Psoas muscle (tissue), 8 donors: ENCODE measurements at regions of chr2 and their contacts with region 1.

Region 1: DNA sequence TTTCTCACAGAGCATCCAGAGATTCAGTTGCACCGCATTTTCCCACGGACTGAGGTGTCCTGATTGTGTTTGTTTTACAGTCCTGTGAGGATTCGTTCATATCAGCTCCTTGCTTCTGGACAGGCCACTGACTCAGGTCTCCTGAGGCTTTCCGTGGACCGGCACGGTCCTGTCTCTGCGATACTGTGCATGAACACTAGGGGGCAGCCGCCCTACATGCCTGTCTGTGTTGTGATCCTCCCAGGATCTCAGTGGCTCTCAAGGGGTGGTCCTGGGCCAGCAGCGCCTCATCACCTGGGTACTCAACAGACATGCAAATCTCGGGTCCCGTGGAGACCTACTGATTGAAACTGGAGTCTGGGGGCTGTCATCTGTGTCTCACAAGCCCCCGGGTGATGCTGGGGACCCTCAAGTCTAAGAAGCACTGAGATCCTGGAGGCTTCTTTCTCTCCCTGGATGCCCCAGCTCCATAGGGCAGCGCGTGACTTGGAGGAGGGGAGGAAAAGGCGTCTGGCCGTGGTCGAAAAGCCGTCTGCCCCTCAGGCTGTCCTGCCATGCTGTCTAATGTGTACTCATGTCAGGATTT is 28.9 kb downstream of the IL1R2 start:
- DNase-seq: peak; percentile 91 to 94
- ATAC-seq: peak; percentile 97 to 99 (median 98)
- H3K4me3 ChIP-seq: no peak overlapping the region
- H3K27ac ChIP-seq: no peak overlapping the region
- H3K4me1 ChIP-seq: peaks cover 15% of the 10 kb centered on the region
- H3K27me3 ChIP-seq: no peaks in the 10 kb centered on the region
- CTCF ChIP-seq: peak; percentile 100

Region 2: DNA sequence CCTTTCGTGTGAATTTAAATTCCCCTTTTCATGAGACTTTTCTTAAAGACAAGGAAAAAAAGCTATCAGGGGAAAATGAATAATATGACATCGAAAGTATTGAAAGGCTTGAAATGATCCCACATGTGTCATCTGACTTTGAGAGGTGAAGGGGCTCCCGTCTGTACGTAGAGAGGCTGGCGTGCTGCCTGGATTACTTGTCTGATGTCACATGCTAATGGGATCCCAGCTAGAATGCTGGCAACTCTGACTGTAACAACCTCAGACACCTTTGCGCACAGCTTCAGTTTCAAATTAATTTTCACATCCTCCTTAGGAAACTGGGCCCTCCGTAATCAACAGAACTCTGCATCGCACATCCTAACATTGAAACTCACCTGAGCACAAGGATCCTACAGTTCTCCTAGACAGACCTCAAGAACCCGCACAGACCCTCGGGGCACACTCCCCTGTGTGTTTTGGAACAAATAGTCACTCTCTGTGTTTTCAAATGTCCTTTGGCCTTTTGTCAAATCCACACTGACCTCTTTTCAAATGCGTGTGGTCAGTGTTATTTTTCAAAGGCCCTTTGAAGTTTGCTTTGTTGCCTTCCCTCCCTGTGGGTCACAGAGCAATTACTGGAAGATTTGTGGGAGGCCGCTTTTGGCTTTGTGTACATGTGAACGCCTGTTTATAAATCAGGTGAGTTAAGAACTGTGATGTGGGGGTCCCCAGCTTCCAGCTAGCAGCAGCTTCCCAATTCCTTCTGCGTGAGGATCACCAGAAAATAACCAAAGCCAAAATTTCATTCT is 37.0 kb after region 1 on chr2:
- intact Hi-C with region 1: loop called in 1 of 2 experiments (anchors 5 kb)
- DNase-seq: no peak
- ATAC-seq: no peak
- H3K4me3 ChIP-seq: no peak overlapping the region
- H3K27ac ChIP-seq: no peak overlapping the region
- H3K4me1 ChIP-seq: peaks cover 30% of the 10 kb centered on the region
- H3K27me3 ChIP-seq: no peaks in the 10 kb centered on the region
- CTCF ChIP-seq: no peak

Region 3: DNA sequence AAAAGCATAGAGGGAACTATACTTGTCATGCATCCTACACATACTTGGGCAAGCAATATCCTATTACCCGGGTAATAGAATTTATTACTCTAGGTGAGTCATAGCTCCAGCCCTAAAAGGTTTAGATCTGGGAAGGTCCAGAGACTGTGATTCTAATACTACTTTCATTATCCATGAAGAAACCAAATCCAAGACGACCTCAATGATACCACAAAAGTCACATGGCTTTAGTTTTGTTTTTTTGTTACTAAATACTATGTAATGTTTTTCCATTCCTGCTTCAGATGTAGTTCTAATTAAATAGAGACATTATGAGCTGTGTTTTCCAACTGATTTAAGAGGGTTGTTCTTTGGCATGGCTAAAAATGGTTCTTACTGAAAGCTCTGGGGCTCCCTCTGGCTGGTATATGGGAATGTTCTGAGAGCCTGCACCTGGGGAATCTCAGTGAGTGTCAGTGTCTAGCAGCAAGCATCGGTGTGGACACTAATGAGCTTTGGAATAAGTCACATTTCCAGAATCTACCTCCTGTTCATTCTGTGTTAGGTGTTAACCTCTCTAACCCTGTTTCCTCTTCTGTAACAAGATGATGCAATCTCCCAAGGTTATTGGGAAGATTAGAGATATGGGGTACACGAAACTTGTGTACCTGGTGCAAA is 145.6 kb after region 1 on chr2:
- intact Hi-C with region 1: loop called (anchors 1 to 5 kb)
- DNase-seq: no peak
- ATAC-seq: peak; percentile 83 to 98 (median 88)
- H3K4me3 ChIP-seq: no peak overlapping the region
- H3K27ac ChIP-seq: no peak overlapping the region
- H3K4me1 ChIP-seq: peaks cover 15% of the 10 kb centered on the region
- H3K27me3 ChIP-seq: no peaks in the 10 kb centered on the region
- CTCF ChIP-seq: peak; percentile 68

Region 4: GRCh38 chr2:102193074-102193473 is 172.4 kb after region 1 on chr2:
- intact Hi-C with region 1: loop called in 1 of 2 experiments (anchors 1 kb)
- DNase-seq: no peak
- ATAC-seq: no peak
- H3K4me3 ChIP-seq: no peak overlapping the region
- H3K27ac ChIP-seq: no peak overlapping the region
- H3K4me1 ChIP-seq: no peaks in the 10 kb centered on the region
- H3K27me3 ChIP-seq: no peaks in the 10 kb centered on the region
- CTCF ChIP-seq: no peak

Region 5: DNA sequence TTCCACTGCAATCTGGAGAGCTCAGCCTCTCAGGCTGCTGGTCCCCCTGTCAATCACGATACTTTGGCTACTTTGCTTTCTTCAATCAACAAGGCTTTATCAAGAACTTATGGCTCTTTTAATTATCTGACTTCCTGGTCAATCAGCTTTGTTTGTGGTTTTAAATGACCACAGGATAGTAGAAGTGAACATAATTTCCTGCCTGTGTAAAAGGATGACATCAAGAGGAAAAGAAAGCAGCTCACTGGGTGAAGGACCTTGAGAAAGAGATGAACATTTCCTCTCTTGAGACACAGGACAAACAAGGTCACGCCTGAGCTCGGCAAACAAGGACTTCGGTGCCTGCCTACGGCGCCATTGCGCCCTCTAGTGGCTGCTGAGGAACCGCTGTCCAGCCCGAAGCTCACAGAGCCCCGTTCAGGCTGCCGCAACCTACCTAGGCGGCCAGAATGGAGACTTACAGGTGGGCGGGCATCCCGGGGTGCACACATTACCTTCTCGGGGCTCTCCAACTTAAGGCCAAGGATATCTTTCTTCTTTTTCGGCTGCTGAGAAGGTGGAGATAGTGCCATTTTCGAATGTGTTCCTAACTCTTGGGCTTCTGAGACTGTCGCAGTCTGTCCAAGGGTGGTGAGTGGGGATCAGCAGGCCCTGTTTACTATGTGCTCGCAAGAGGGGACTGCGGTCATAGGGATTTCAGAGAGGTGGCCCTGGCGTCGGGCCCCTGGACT is 220.1 kb after region 1 on chr2:
- intact Hi-C with region 1: loop called (anchors 1 to 2 kb)
- DNase-seq: peak; percentile 90 to 96
- ATAC-seq: peak; percentile 96 to 99 (median 98)
- H3K4me3 ChIP-seq: no peak overlapping the region
- H3K27ac ChIP-seq: peak overlapping the region; percentile 41
- H3K4me1 ChIP-seq: no peaks in the 10 kb centered on the region
- H3K27me3 ChIP-seq: no peaks in the 10 kb centered on the region
- CTCF ChIP-seq: peak; percentile 99

Region 6: GRCh38 chr2:102355526-102356380 is 335.1 kb after region 1 on chr2 and contains the start of gene IL18R1:
- intact Hi-C with region 1: loop called (anchors 10 kb)
- DNase-seq: peak; percentile 81 to 88
- ATAC-seq: peak; percentile 96 to 100 (median 99)
- H3K4me3 ChIP-seq: peak within 1 kb of the TSS; percentile 84
- H3K27ac ChIP-seq: peak within 1 kb of the TSS; percentile 32
- H3K4me1 ChIP-seq: no peaks in the 10 kb centered on the region
- H3K27me3 ChIP-seq: no peaks in the 10 kb centered on the region
- CTCF ChIP-seq: peak; percentile 84
- total RNA-seq, gene IL18R1: 0.80 to 2.1 (median 0.97) TPM

Region 7: GRCh38 chr2:102442967-102443828 is 422.5 kb after region 1 on chr2:
- intact Hi-C with region 1: loop called in 1 of 2 experiments (anchors 10 kb)
- DNase-seq: no peak
- ATAC-seq: no peak
- H3K4me3 ChIP-seq: no peak overlapping the region
- H3K27ac ChIP-seq: no peak overlapping the region
- H3K4me1 ChIP-seq: no peaks in the 10 kb centered on the region
- H3K27me3 ChIP-seq: peaks cover 0 to 2% (median 0%) of the 10 kb centered on the region in 3 donors
- CTCF ChIP-seq: peak; percentile 49